Lower leg skin (tissue), 4 donors: ENCODE measurements at regions of chr12 and their contacts with region 1.

Region 1: DNA sequence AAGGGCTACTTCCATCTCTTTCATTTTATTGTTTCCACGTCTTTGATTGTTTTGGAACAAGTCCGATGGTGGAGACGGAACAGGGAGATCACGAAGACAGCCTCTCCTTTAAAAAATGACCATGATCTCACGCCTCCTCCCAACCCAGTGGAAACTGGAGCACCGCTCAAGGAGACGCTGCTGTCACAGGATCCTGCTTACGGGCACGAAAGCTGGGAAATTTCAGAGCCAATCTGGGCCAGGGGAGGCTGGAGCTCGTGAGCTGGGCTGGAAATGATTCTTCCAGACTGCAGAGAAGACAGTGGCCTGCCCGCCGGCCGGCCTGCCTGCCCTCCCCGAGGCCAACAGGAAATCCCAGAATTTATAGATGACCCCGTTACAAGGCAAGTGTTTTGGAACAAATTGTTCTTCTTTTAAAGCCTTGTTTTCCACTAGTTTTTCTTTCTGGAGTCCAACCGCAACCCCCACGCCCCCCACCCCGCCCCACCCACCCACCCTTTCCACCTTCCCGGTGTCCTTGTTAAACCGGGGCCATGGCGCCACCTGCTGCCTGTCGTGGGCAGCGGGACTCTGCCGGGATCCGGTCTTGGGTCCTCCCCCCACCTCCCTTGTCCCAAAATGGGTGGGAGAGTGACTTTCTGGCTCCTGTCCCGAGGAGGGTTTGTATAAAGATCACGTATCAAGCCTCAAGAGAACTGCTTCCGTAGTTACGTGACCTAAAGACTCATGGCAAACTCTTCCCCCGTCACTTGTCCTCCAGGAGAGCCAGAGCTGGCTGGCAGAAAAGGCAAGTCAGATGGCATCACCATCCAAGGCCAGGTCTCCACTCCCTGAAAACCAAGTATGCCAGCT is 40.3 kb downstream of the MAP1LC3B2 start:
- DNase-seq: peak; percentile 81 to 97
- H3K4me3 ChIP-seq: no peak overlapping the region
- CTCF ChIP-seq: no peak
- POLR2A ChIP-seq: no peak

Region 2: GRCh38 chr12:116009805-116010204 is 589.7 kb before region 1 on chr12:
- intact Hi-C with region 1: loop called (anchors 10 kb)
- DNase-seq: no peak
- H3K4me3 ChIP-seq: no peak overlapping the region
- CTCF ChIP-seq: no peak
- POLR2A ChIP-seq: no peak

Region 3: DNA sequence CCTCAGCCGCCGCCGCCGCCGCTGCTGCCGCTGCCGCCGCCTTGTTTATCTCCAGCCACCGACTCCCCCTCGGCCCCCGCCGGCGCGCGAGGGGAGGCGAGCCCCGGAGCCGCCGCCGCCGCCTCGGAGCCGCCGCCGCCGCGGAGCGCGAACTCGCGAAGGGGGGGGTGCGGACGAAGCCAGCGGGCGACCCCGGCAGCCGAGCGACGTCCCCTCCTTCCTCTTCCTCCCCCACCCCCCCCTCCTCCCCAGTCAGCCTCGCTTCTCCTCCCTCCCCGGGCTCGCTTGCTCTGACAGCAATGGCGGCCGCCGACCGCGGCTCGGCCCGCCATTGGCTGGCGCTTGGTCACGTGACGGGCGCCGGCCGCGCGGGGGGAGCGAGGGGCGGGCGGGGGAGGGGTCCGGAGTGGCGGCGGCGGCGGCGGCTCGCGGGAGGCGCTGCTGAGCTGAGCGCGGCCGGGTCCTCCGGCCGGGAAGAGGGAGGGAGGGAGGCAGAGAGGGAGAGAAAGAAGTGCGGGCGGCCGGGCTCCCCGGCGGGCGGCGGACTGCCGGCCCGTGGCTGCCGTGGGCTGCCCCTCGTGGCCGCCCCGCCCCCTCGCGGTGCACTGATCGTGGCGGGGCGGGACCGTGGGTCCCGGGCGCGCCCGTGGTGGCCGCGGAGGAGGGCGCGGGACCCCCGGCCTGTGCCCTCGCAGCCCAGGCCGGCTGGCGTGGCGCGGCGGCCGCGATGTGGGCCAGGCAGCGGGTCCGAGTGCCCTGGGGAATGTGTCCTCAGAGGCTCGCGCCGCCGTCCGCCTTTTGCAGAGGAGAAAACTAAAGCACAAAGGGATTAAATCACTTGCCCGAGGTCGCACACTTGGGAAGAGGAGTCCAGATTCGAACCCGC is 321.9 kb before region 1 on chr12 and contains the start of gene MED13L:
- intact Hi-C with region 1: loop called (anchors 10 kb)
- DNase-seq: peak; percentile 81 to 97
- H3K4me3 ChIP-seq: peak within 1 kb of the TSS; percentile 74
- CTCF ChIP-seq: no peak
- POLR2A ChIP-seq: peak in 1 of 2 donors; percentile 34
- total RNA-seq, gene MED13L: 158 to 247 (median 166) TPM

Region 4: GRCh38 chr12:116441292-116441691 is 158.2 kb before region 1 on chr12:
- intact Hi-C with region 1: no loop called
- DNase-seq: no peak
- H3K4me3 ChIP-seq: no peak overlapping the region
- CTCF ChIP-seq: no peak
- POLR2A ChIP-seq: no peak